ENCODE measurements at regions of chr12 and their contacts with region 1.

Region 1: DNA sequence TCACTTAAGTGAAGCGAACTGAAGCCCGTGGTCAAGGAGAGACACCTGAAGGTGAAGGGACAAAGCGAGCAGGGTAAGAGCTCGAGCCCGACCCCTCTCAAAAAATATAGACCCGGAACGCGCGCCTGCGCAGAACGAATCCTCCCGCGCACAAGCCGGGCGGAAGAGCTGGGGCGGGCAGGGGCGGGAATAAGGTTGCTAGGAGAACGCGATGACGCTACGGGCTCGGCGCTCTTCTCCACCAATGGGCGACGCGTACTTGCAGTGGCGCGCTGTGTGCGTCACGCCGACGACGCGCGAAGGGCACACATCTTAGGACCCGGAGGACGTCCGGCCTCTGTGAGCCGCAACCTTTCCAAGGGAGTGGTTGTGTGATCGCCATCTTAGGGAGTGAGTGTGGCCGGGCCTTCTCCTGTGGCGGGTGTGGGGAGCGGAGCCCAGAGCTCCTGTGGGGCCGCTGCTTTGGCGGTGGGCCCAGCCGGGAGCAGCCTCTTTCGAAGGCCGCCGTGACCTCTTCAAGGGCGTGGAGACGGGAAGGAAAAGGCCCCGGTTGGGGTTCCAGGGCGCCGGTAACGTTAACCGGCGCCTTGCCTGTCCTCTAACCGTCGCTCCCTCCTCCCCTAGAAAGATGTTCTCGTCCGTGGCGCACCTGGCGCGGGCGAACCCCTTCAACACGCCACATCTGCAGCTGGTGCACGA is at the start of gene SLC25A3:
- DNase-seq: peak; percentile 98
- ATAC-seq: peak; percentile 96
- H3K4me3 ChIP-seq: peak within 1 kb of the TSS; percentile 96
- H3K27ac ChIP-seq: peak within 1 kb of the TSS; percentile 95
- H3K4me1 ChIP-seq: peaks cover 5% of the 10 kb centered on the region
- H3K27me3 ChIP-seq: no peaks in the 10 kb centered on the region
- CTCF ChIP-seq: no peak
- POLR2A ChIP-seq: peak; percentile 99
- RAD21 ChIP-seq: no peak
- total RNA-seq, gene SLC25A3: 861 and 1,218 TPM in 2 replicates

Region 2: GRCh38 chr12:98503592-98504367 is 89.7 kb before region 1 on chr12:
- CTCF ChIA-PET with region 1: no interaction called
- POLR2A ChIA-PET with region 1: no interaction called
- dilution Hi-C with region 1: no loop called
- in situ Hi-C with region 1: no loop called
- intact Hi-C with region 1: loop called (anchors 5 kb)
- DNase-seq: peak; percentile 89
- ATAC-seq: peak; percentile 90
- H3K4me3 ChIP-seq: peak overlapping the region; percentile 72
- H3K27ac ChIP-seq: peak overlapping the region; percentile 93
- H3K4me1 ChIP-seq: no peaks in the 10 kb centered on the region
- H3K27me3 ChIP-seq: no peaks in the 10 kb centered on the region
- CTCF ChIP-seq: no peak
- POLR2A ChIP-seq: no peak
- RAD21 ChIP-seq: no peak

Region 3: GRCh38 chr12:98532681-98533304 is 60.7 kb before region 1 on chr12:
- CTCF ChIA-PET with region 1: interaction called, 7 read pairs
- POLR2A ChIA-PET with region 1: no interaction called
- dilution Hi-C with region 1: no loop called
- in situ Hi-C with region 1: no loop called
- intact Hi-C with region 1: loop called (anchors 5 kb)
- DNase-seq: peak; percentile 62
- ATAC-seq: peak; percentile 72
- H3K4me3 ChIP-seq: no peak overlapping the region
- H3K27ac ChIP-seq: no peak overlapping the region
- H3K4me1 ChIP-seq: no peaks in the 10 kb centered on the region; the same call in 1 of the 2 replicates
- H3K27me3 ChIP-seq: no peaks in the 10 kb centered on the region
- CTCF ChIP-seq: peak; percentile 56
- POLR2A ChIP-seq: no peak
- RAD21 ChIP-seq: peak; percentile 39

Region 4: GRCh38 chr12:98606357-98606988 is 13.0 kb after region 1 on chr12:
- CTCF ChIA-PET with region 1: interaction called, 4 read pairs
- POLR2A ChIA-PET with region 1: interaction called, 5 read pairs
- dilution Hi-C with region 1: no loop called
- in situ Hi-C with region 1: no loop called
- intact Hi-C with region 1: loop called (anchors 1 kb)
- DNase-seq: no peak
- ATAC-seq: 0 out of 2 replicates have a peak, but pooled peaks have one; percentile 19
- H3K4me3 ChIP-seq: no peak overlapping the region
- H3K27ac ChIP-seq: no peak overlapping the region
- H3K4me1 ChIP-seq: no peaks in the 10 kb centered on the region
- H3K27me3 ChIP-seq: no peaks in the 10 kb centered on the region
- CTCF ChIP-seq: 0 out of 2 replicates have a peak, but pooled peaks have one; percentile 9
- POLR2A ChIP-seq: no peak
- RAD21 ChIP-seq: no peak

Region 5: DNA sequence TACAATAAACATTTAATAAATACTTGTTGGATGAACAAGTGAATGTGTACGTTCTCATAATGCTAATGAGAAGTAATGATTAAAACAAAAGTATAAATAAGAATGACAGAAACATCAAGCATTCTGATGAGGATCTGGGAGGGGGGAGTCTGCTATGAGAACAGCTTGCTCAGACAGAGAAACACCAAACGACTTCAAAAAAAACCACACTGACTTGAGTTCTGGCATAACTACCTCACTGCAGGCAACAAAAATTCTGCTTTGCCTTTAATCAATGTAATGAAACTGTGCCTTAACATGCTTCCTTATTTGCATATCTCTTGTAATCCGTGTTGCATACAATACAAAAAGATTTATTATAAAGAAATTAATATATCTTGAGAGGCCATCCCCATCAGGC is 758.8 kb after region 1 on chr12:
- CTCF ChIA-PET with region 1: no interaction called
- POLR2A ChIA-PET with region 1: no interaction called
- dilution Hi-C with region 1: no loop called
- in situ Hi-C with region 1: no loop called
- intact Hi-C with region 1: no loop called
- DNase-seq: no peak
- ATAC-seq: no peak
- H3K4me3 ChIP-seq: no peak overlapping the region
- H3K27ac ChIP-seq: no peak overlapping the region
- H3K4me1 ChIP-seq: no peaks in the 10 kb centered on the region
- H3K27me3 ChIP-seq: no peaks in the 10 kb centered on the region
- CTCF ChIP-seq: no peak
- POLR2A ChIP-seq: no peak
- RAD21 ChIP-seq: no peak